Sigmoid colon (tissue), 7 donors: ENCODE measurements at regions of chr14 and their contacts with region 1.

Region 1: GRCh38 chr14:58501214-58501816 is 73.8 kb downstream of the KIAA0586 start:
- DNase-seq: no peak
- H3K4me3 ChIP-seq: no peak overlapping the region
- H3K27ac ChIP-seq: no peak overlapping the region
- H3K4me1 ChIP-seq: no peaks in the 10 kb centered on the region
- H3K27me3 ChIP-seq: no peaks in the 10 kb centered on the region
- CTCF ChIP-seq: peak; percentile 63 to 85 (median 78)
- EP300 ChIP-seq: no peak
- POLR2A ChIP-seq: no peak

Region 2: GRCh38 chr14:58626431-58626831 is 125.1 kb after region 1 on chr14:
- intact Hi-C with region 1: no loop called
- DNase-seq: no peak
- H3K4me3 ChIP-seq: no peak overlapping the region
- H3K27ac ChIP-seq: no peak overlapping the region
- H3K4me1 ChIP-seq: no peaks in the 10 kb centered on the region
- H3K27me3 ChIP-seq: no peaks in the 10 kb centered on the region
- CTCF ChIP-seq: no peak
- EP300 ChIP-seq: no peak
- POLR2A ChIP-seq: no peak

Region 3: DNA sequence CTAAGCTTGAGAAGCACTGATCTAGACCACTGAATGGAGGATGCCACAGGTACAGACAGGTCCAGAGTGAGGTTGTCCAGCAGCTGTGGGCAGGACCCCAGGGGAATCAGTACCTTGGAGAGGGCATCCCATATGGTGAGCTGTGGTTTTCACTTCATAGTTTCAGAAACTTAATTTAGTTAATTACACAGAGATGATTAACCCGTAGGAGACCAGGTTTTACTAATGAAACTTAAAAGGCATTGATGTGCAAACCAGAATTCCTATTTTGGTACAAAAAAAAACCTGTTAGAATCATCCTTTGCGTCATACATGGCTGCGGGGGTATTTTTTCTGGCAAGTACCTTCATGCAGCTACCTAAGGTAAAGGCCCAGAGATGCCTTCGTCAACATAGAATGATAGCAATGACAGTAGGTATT is 295.7 kb after region 1 on chr14:
- intact Hi-C with region 1: no loop called
- DNase-seq: no peak
- H3K4me3 ChIP-seq: no peak overlapping the region
- H3K27ac ChIP-seq: no peak overlapping the region
- H3K4me1 ChIP-seq: no peaks in the 10 kb centered on the region
- H3K27me3 ChIP-seq: no peaks in the 10 kb centered on the region
- CTCF ChIP-seq: no peak
- EP300 ChIP-seq: no peak
- POLR2A ChIP-seq: no peak

Region 4: DNA sequence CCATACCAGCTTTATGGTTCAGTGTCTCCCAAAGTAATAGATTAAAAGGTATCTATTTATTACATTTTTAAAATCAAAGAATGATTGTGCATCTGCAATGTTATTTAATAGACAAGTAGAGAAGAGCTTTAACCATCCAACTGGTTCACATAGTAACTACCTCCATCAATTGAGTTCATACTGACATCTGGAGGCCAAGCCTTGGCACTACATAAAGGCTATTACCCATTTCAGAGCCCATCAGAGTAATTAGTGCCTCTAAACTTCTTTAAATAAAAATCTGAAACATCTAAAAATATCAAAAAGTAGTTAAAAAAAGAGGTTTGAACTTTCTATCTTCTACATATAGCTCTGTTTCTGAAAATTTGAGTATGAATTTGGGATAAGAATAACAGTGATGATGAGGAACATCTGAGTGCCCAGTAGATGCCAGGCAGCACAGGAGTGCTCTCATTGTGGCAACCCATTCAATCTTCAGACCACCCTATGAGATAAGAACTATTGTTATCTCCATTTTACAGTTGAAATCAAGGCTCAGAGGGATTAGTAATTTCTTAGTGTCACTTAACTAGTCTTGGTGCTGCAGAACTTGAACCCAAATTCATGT is 554.2 kb after region 1 on chr14:
- intact Hi-C with region 1: loop called (anchors 5 kb)
- DNase-seq: no peak
- H3K4me3 ChIP-seq: no peak overlapping the region
- H3K27ac ChIP-seq: no peak overlapping the region
- H3K4me1 ChIP-seq: no peaks in the 10 kb centered on the region
- H3K27me3 ChIP-seq: no peaks in the 10 kb centered on the region
- CTCF ChIP-seq: peak; percentile 12 to 66 (median 44)
- EP300 ChIP-seq: no peak
- POLR2A ChIP-seq: no peak